ENCODE measurements at regions of chrX and their contacts with region 1.

Region 1: DNA sequence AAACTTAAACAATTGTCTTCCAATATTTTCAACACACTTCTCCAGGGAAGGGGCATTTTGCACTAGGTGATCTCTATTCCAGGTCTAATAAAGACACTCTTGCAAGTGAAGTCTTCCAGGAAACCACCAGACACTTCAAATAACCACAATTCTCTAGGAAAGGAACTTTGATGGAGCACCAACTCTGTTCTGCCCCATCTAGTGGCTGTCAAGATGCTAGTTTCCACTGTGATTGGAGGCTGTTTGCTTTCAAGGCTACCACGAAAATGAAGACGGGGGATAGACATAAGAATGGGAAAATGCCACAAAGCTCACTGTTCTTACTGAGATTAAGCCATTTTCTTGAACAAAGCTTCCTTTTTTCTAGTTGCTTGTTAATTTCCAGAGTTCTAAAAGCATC is 100.6 kb upstream of the F9 start:
- DNase-seq: no peak
- ATAC-seq: peak in 1 of 4 donors; percentile 68
- H3K4me3 ChIP-seq: no peak overlapping the region
- H3K27ac ChIP-seq: no peak overlapping the region
- H3K4me1 ChIP-seq: no peaks in the 10 kb centered on the region
- H3K27me3 ChIP-seq: no peaks in the 10 kb centered on the region
- CTCF ChIP-seq: peak; percentile 37

Region 2: DNA sequence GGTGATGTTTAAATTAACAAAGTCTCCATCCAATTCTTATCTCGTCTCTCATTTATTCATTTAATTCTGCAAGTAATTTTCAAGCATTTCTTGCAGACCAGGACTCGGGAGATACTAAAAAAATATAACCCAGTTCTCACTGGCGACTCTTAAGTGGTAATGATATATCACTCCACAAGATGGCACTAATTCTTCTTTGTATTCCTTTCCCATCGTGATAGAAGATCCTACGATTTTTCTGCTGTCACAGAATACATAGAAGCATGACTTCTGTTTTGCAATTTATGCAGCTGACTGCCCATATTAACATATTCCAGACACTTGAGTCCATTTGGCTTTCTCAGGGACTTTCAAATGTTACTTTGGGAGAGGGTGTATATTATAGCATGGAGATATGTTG is 654.4 kb before region 1 on chrX:
- intact Hi-C with region 1: loop called in 1 of 2 experiments (anchors 10 kb)
- DNase-seq: no peak
- ATAC-seq: peak; percentile 47 to 77 (median 52)
- H3K4me3 ChIP-seq: no peak overlapping the region
- H3K27ac ChIP-seq: no peak overlapping the region
- H3K4me1 ChIP-seq: no peaks in the 10 kb centered on the region
- H3K27me3 ChIP-seq: no peaks in the 10 kb centered on the region
- CTCF ChIP-seq: peak; percentile 52

Region 3: DNA sequence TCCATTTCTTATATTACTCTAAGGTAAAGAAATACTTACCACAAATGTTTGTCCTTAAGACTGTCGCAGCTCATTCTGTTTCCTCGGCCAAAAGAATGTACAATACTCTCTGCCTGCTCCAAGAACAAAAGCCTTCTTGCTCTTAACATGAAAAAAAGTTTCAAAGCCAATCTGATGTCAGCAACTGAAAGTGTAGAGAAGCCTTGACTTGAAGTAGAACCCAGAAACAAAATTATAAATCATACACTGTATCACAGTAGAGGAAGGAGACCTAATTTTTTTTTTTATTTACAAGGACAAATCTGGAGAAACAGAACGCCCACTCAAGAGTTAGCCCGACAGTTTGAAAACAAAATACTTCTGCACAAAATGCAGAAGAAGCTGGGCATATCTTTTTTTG is 278.2 kb after region 1 on chrX and contains the start of gene MCF2:
- intact Hi-C with region 1: no loop called
- DNase-seq: no peak
- ATAC-seq: no peak
- H3K4me3 ChIP-seq: no peak within 1 kb of the TSS
- H3K27ac ChIP-seq: no peak within 1 kb of the TSS
- H3K4me1 ChIP-seq: no peaks in the 10 kb centered on the region
- H3K27me3 ChIP-seq: no peaks in the 10 kb centered on the region
- CTCF ChIP-seq: no peak
- total RNA-seq, gene MCF2: 0.14 TPM in 1 of 4 donors, not detected in the others

Measured in psoas muscle (tissue), 8 donors.